ENCODE measurements at regions of chr17 and their contacts with region 1.

Region 1: DNA sequence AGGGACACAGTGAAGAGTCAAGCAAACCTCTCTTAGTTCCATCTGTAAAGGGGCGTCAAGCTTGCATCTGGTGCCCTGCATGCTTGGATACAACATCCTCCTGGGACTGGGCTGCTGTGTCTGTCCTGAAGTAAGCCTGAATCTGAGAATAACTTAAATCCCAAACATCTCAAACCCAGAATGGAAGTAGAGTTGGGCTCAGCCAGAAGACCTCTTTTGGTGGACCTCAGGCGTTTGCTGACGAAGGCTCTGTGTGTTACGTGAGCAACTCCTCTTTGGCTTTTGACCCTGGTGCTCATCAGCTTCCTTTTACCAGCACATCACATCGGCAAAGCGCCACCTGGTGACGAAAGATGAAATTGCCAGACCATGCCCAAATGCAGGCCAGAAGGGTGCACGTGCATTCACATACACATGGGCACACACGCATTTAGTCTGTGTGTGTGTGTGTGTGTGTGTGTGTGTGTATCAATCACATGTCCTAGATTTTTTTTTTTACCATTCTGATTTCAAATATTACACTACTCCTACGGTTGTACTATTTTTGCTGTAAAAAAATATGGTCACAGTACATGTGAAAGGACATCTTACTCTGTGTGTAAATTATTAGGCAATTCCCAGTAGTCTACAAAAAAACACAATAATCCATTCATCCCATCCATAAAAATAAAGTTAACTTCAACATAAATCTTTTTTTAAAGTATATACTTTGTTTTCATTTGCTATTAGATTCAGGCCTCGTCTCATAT is 41.1 kb upstream of the FOXJ1 start:
- DNase-seq: peak; percentile 99
- ATAC-seq: peak; percentile 80
- H3K4me3 Mint-ChIP-seq: peak overlapping the region; percentile 56
- H3K27ac Mint-ChIP-seq: peak overlapping the region; percentile 96
- H3K4me1 Mint-ChIP-seq: peaks cover 65% of the 10 kb centered on the region
- H3K27me3 Mint-ChIP-seq: no peaks in the 10 kb centered on the region
- CTCF ChIP-seq: peak; percentile 73

Region 2: GRCh38 chr17:76121932-76122430 is 60.2 kb before region 1 on chr17:
- CTCF ChIA-PET with region 1: interaction called, 25 read pairs
- POLR2A ChIA-PET with region 1: interaction called, 7 read pairs
- intact Hi-C with region 1: loop called (anchors 5 kb)
- DNase-seq: peak; percentile 40
- ATAC-seq: peak; percentile 10
- H3K4me3 Mint-ChIP-seq: peak overlapping the region; percentile 45
- H3K27ac Mint-ChIP-seq: peak overlapping the region; percentile 77
- H3K4me1 Mint-ChIP-seq: peaks cover 20% of the 10 kb centered on the region
- H3K27me3 Mint-ChIP-seq: no peaks in the 10 kb centered on the region
- CTCF ChIP-seq: no peak

Region 3: GRCh38 chr17:76141212-76142038 is 40.8 kb before region 1 on chr17 and contains the start of gene FOXJ1:
- CTCF ChIA-PET with region 1: interaction called, 80 read pairs
- POLR2A ChIA-PET with region 1: interaction called, 11 read pairs
- intact Hi-C with region 1: loop called (anchors 5 kb)
- DNase-seq: peak; percentile 92
- ATAC-seq: peak; percentile 67
- H3K4me3 Mint-ChIP-seq: peak within 1 kb of the TSS; percentile 72
- H3K27ac Mint-ChIP-seq: peak within 1 kb of the TSS; percentile 46
- H3K4me1 Mint-ChIP-seq: peaks cover 57% of the 10 kb centered on the region
- H3K27me3 Mint-ChIP-seq: peaks cover 1% of the 10 kb centered on the region
- CTCF ChIP-seq: no peak
- total RNA-seq, gene FOXJ1: 11.1 to 11.6 TPM

Region 4: DNA sequence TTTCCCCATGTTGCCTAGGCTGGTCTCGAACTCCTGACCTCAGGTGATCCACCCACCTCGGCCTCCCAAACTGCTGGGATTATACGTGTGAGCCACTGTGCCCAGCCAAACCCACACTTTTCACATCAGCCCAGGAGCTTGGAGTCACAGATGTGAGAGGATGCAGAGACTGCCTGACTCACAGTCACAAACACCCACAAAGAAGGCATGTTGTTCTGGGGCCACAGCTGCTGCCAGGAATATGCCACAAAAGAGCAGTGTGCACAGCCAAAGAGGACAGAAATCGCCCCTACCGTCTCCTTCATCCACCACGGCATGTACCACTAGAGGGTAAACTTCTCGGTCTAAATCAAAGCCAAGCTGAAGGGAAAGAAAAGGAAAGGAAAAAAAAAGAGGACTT is 16.0 kb before region 1 on chr17:
- CTCF ChIA-PET with region 1: interaction called, 60 read pairs
- POLR2A ChIA-PET with region 1: interaction called, 8 read pairs
- intact Hi-C with region 1: no loop called
- DNase-seq: no peak
- ATAC-seq: peak; percentile 53
- H3K4me3 Mint-ChIP-seq: no peak overlapping the region
- H3K27ac Mint-ChIP-seq: peak overlapping the region; percentile 75
- H3K4me1 Mint-ChIP-seq: peaks cover 13% of the 10 kb centered on the region
- H3K27me3 Mint-ChIP-seq: no peaks in the 10 kb centered on the region
- CTCF ChIP-seq: no peak

Region 5: GRCh38 chr17:76271669-76272540 is 89.7 kb after region 1 on chr17:
- CTCF ChIA-PET with region 1: interaction called, 95 read pairs
- POLR2A ChIA-PET with region 1: interaction called, 700 read pairs
- intact Hi-C with region 1: no loop called
- DNase-seq: peak; percentile 97
- ATAC-seq: peak; percentile 64
- H3K4me3 Mint-ChIP-seq: peak overlapping the region; percentile 96
- H3K27ac Mint-ChIP-seq: peak overlapping the region; percentile 99
- H3K4me1 Mint-ChIP-seq: peaks cover 47% of the 10 kb centered on the region
- H3K27me3 Mint-ChIP-seq: no peaks in the 10 kb centered on the region
- CTCF ChIP-seq: no peak

Region 6: DNA sequence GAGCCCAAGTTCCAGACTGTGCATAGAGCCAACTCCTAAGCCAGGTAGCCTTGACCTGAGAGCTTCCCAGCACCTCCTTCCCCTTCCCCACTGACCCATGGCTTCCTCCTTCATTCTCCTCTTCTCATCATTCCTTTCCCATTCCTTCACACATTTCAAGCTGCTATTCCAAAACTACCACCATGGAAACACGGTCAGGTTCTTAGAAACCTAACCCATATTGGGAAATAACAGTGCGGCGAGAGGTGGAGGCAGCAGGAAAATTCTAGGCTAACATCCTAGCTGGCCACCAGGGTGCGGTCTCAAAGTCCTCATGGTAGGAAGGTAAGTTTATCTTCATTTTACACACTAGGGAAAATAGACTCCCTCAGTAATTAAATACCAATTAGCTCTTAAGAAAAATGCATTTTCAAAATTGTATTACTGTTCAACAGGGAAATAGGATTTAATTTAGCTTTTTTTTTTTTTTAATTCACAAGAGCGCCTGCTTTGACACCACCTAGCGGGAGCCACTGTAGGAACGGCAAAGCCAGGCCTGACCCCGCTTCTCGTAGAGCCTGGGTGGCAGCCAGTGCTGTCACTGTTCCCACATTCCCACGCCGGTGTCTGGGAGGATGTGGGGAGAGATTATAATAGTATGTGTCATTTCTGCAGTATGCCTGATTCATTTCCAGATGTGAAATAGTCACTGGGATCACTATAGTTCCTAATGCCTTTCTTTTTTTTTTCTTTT is 188.2 kb after region 1 on chr17:
- CTCF ChIA-PET with region 1: no interaction called
- POLR2A ChIA-PET with region 1: no interaction called
- intact Hi-C with region 1: no loop called
- DNase-seq: no peak
- ATAC-seq: no peak
- H3K4me3 Mint-ChIP-seq: no peak overlapping the region
- H3K27ac Mint-ChIP-seq: no peak overlapping the region
- H3K4me1 Mint-ChIP-seq: peaks cover 7% of the 10 kb centered on the region
- H3K27me3 Mint-ChIP-seq: no peaks in the 10 kb centered on the region
- CTCF ChIP-seq: no peak